ENCODE measurements at regions of chr3 and their contacts with region 1.

Region 1: GRCh38 chr3:27312044-27312668 is 57.0 kb downstream of the NEK10 start:
- DNase-seq: no peak
- ATAC-seq: peak; percentile 82

Region 2: DNA sequence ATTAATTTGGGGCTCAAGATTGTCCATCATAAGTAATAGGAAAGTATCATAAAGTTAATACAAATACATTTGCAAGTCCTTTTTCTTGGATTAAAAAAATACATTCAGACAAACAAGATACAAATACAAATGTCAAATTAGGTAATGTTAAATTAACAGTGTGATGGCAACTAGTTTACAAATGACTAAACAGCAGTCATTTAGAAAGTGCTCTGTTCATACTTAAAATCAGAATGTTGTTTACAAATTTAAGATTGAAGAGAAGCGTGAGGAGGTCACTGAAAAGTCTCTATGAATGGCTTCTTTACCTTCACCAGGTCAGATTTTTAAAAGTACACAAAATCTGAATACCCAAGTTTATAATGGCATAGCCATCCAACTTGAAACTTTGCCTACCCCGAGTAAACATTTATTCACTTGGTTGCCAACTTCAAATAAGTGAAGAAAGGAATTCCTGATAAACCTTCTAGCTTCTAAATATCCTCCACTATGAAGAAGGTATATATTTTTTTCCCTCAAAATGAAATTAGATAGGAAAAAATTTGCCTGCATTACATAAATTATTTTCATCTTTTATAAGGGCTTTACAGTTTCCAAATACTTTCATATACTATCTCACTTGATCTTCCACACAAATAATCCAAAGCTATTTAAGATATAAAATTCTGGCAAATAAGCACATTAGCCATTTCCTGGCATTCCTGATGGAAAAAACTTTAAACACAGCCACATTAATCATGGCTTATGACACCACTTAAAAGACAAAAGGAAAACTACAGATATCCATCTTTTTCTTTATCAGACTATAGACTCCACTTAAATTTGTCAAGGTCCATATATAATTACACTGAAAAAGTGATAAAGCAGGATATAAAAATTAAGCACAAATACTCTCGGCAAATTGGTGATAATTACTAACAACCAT is 68.5 kb after region 1 on chr3:
- intact Hi-C with region 1: no loop called
- DNase-seq: no peak
- ATAC-seq: no peak

Region 3: DNA sequence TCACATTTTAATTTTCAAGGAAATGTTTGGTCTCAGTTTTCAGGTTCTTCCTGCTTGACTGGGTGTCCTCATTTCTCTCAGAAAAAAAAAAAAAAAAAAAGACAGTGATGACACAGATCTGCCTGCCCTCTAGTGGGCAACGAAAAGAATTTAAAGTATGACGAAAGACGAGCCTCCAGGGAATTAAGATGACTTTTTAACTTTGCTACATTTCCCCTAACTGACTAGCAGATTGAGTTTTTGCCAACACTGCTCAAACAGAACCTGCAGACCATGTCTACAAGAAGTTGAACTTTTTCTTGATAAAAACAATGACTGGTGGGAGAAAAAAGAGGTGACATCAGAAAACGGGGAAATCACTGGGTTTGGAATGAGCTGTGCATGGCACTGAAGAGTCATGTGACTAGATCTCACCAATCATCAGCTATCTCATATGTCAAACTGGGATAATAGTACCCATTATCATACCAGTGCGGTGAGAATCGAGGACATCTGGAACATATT is 369.1 kb after region 1 on chr3:
- intact Hi-C with region 1: loop called (anchors 10 kb)
- DNase-seq: no peak
- ATAC-seq: peak; percentile 80